OCI-LY7 (cell line): ENCODE measurements at regions of chr7 and their contacts with region 1.

Region 1: DNA sequence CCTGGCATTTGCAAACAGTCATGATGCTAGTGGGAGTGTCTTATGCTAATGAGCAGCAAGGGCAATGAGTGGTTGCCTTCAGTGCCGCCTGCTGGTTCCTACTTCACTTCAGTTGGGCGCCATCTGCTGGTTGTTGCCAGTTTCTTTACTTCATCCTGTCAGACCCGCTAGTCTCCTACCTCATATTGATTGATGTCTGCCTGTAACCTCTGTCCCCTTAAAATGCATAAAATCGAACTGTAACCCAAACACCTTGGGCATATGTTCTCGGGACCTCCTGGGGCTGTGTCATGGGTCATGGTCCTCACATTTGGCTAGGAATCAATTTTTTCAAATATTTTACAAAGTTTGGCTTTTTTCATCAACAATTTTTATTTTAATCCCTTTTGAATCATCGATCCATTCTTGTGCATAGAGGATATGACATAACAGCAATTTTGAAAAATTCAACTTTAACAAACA is 62.8 kb upstream of the C7orf33 start:
- DNase-seq: peak; percentile 81
- H3K4me3 ChIP-seq: no peak overlapping the region
- H3K27ac ChIP-seq: no peak overlapping the region
- H3K4me1 ChIP-seq: no peaks in the 10 kb centered on the region
- CTCF ChIP-seq: peak; percentile 92

Region 2: DNA sequence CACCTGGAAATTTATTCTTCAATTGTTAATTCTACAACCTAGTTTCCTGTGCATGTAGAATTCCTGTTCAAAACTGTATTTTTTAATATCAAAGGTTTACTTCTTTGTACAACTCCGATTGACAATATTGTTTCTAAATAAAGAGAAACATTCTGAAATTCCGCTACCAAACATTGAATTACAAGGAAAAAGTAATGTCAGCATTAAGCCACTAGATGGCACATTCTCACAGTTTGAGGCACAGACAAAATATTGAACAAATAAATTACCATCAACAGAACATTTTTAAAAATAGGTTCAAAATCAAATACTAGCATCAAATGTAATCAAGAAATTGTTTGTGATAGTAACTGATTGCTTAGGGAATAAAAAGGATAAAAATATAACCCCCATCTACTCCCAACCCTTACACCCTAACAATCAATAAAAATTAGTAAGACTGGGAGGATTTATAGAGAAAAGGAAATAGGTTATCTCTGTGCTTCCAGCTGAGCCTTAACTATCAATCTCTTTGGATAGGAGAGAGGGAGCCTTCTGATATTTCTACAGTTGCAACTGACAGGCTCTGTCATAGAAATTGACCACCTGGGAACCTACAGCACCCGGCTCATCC is 23.8 kb before region 1 on chr7:
- CTCF ChIA-PET with region 1: no interaction called
- POLR2A ChIA-PET with region 1: no interaction called
- intact Hi-C with region 1: loop called (anchors 2 kb)
- DNase-seq: peak; percentile 47
- H3K4me3 ChIP-seq: no peak overlapping the region
- H3K27ac ChIP-seq: no peak overlapping the region
- H3K4me1 ChIP-seq: peaks cover 9% of the 10 kb centered on the region
- CTCF ChIP-seq: peak; percentile 98

Region 3: GRCh38 chr7:148712678-148713329 is 185.1 kb after region 1 on chr7:
- CTCF ChIA-PET with region 1: no interaction called
- POLR2A ChIA-PET with region 1: no interaction called
- intact Hi-C with region 1: no loop called
- DNase-seq: peak; percentile 23
- H3K4me3 ChIP-seq: no peak overlapping the region
- H3K27ac ChIP-seq: peak overlapping the region; percentile 43
- H3K4me1 ChIP-seq: peaks cover 64% of the 10 kb centered on the region
- CTCF ChIP-seq: no peak